Panc1 (cell line): ENCODE measurements at regions of chr10 and their contacts with region 1.

Region 1: GRCh38 chr10:103333925-103334520 is 16.9 kb downstream of the PCGF6 start:
- DNase-seq: no peak
- ATAC-seq: no peak
- H3K4me3 ChIP-seq: no peak overlapping the region
- H3K27ac ChIP-seq: no peak overlapping the region
- H3K4me1 ChIP-seq: no peaks in the 10 kb centered on the region
- H3K27me3 ChIP-seq: no peaks in the 10 kb centered on the region
- CTCF ChIP-seq: no peak

Region 2: DNA sequence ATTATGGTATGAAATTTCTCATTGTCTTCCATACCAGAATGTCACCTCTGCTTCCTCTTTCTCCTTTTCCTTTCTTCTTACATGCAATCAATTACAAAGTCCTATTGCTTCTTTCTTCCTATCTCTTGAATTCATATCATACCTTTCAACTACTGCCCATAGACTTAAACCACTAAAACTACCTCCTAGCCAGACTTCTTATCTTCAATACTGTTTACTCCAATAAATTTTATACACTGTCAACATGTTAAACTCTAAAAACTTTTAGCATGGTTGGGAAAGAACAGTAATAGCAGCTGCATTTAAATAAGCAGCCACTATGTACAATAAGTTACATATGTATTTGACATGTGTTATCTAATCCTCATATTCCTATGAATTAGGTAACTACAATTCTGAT is 17.9 kb before region 1 on chr10:
- CTCF ChIA-PET with region 1: no interaction called
- POLR2A ChIA-PET with region 1: interaction called, 10 read pairs
- in situ Hi-C with region 1: no loop called
- intact Hi-C with region 1: no loop called
- DNase-seq: no peak
- ATAC-seq: no peak
- H3K4me3 ChIP-seq: no peak overlapping the region
- H3K27ac ChIP-seq: no peak overlapping the region
- H3K4me1 ChIP-seq: no peaks in the 10 kb centered on the region
- H3K27me3 ChIP-seq: no peaks in the 10 kb centered on the region
- CTCF ChIP-seq: no peak